HEK293 (cell line): ENCODE measurements at regions of chr9 and their contacts with region 1.

Region 1: GRCh38 chr9:34332076-34332964 is 3.0 kb downstream of the NUDT2 start:
- H3K4me3 ChIP-seq: no peak overlapping the region
- H3K27ac ChIP-seq: no peak overlapping the region
- H3K4me1 ChIP-seq: no peaks in the 10 kb centered on the region
- CTCF ChIP-seq: peak; percentile 48; the same call in 1 of the 2 replicates

Region 2: GRCh38 chr9:34384368-34385165 is 52.2 kb after region 1 on chr9:
- CTCF ChIA-PET with region 1: interaction called, 172 read pairs
- POLR2A ChIA-PET with region 1: no interaction called
- H3K4me3 ChIP-seq: no peak overlapping the region
- H3K27ac ChIP-seq: no peak overlapping the region
- H3K4me1 ChIP-seq: no peaks in the 10 kb centered on the region
- CTCF ChIP-seq: no peak